GM18951 (cell line): ENCODE measurements at regions of chr4 and their contacts with region 1.

Region 1: DNA sequence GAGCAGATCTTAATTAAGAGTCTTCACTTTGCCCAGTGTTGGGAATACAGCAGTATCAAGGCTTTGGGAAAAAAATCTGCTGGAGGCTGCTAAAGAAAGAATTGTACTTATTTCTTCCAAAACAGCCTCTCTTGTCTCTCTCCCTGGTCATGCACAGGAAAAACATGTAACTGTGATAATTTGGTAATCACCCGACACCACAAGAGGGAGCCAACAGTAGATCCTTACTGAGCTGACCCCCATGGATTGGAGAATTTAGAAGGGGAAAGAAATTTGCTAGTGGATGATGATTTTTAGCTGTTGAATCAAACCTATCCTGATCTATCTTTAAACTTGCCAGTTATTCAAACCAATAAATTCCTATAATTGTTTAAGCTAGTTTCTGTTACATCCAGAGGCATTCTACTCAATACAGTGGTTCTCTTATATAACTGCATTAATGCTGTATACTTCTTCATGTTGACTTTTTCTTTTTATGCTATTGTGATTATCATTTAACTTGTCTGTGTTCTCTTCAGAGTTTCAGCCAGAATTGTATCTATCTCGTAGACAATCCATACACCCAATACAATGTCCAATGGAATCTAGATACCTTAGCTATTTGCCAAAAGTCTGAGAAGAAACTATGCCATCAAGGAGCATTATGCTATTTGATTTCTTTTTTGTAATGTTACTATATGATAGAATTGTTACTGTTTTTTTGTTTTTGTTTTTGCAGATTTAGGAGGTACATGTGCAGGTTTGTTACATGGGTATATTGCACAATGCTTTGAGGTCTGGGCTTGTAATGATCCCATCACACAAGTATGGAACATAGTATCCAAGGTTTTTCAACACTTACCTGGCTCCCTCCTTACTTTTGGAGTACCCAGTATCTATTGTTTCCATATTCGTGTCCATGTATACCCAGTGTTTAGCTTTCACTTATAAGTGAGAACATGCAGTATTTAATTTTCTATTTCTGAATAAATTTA is 31.3 kb upstream of the ARHGEF38 start:
- POLR2A ChIP-seq: no peak

Region 2: DNA sequence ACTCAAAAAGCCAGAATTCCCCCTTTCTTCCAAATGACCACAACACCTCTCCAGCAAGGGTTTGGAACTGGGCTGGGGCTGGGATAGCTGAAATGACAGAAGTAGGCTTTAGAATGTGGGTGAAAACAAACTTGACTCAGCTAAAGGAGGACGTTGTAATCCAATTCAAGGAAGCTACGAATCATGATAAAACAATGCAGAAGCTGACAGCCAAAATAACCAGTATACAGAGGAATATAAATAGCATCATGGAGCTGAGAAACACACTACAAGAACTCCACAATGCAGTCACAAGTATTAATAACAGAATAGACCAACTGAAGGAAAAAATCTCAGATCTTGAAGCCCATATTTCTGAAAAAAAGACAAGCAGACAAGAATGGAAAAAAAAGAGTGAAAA is 470.2 kb before region 1 on chr4:
- in situ Hi-C with region 1: no loop called
- POLR2A ChIP-seq: no peak

Region 3: GRCh38 chr4:105708530-105709391 is 187.7 kb after region 1 on chr4 and contains the starts of genes GSTCD and INTS12:
- in situ Hi-C with region 1: loop called (anchors 25 kb)
- POLR2A ChIP-seq: peak; percentile 91